Caco-2 (cell line): ENCODE measurements at regions of chr1 and their contacts with region 1.

Region 1: GRCh38 chr1:49346767-49347349 is 570.2 kb upstream of the BEND5 start:
- DNase-seq: peak; percentile 53 to 59
- H3K4me3 ChIP-seq: no peak overlapping the region
- H3K4me3 Mint-ChIP-seq: peak overlapping the region; percentile 32
- H3K27ac Mint-ChIP-seq: peak overlapping the region; percentile 79
- H3K4me1 ChIP-seq: peaks cover 43% of the 10 kb centered on the region
- H3K4me1 Mint-ChIP-seq: peaks cover 20% of the 10 kb centered on the region
- H3K27me3 ChIP-seq: no peaks in the 10 kb centered on the region
- H3K27me3 Mint-ChIP-seq: no peaks in the 10 kb centered on the region
- CTCF ChIP-seq: no peak

Region 2: GRCh38 chr1:49102752-49103151 is 244.1 kb before region 1 on chr1:
- CTCF ChIA-PET with region 1: no interaction called
- POLR2A ChIA-PET with region 1: no interaction called
- intact Hi-C with region 1: loop called (anchors 10 kb)
- DNase-seq: no peak
- H3K4me3 ChIP-seq: no peak overlapping the region
- H3K4me3 Mint-ChIP-seq: no peak overlapping the region
- H3K27ac Mint-ChIP-seq: no peak overlapping the region
- H3K4me1 ChIP-seq: no peaks in the 10 kb centered on the region
- H3K4me1 Mint-ChIP-seq: no peaks in the 10 kb centered on the region
- H3K27me3 ChIP-seq: no peaks in the 10 kb centered on the region
- H3K27me3 Mint-ChIP-seq: no peaks in the 10 kb centered on the region
- CTCF ChIP-seq: no peak